ENCODE measurements at regions of chr4 and their contacts with region 1.

Region 1: GRCh38 chr4:47095884-47096283 is 64.5 kb downstream of the GABRB1 start:
- DNase-seq: no peak
- H3K4me3 ChIP-seq: no peak overlapping the region
- H3K27ac ChIP-seq: no peak overlapping the region
- H3K4me1 ChIP-seq: no peaks in the 10 kb centered on the region
- H3K27me3 ChIP-seq: no peaks in the 10 kb centered on the region
- CTCF ChIP-seq: no peak

Region 2: DNA sequence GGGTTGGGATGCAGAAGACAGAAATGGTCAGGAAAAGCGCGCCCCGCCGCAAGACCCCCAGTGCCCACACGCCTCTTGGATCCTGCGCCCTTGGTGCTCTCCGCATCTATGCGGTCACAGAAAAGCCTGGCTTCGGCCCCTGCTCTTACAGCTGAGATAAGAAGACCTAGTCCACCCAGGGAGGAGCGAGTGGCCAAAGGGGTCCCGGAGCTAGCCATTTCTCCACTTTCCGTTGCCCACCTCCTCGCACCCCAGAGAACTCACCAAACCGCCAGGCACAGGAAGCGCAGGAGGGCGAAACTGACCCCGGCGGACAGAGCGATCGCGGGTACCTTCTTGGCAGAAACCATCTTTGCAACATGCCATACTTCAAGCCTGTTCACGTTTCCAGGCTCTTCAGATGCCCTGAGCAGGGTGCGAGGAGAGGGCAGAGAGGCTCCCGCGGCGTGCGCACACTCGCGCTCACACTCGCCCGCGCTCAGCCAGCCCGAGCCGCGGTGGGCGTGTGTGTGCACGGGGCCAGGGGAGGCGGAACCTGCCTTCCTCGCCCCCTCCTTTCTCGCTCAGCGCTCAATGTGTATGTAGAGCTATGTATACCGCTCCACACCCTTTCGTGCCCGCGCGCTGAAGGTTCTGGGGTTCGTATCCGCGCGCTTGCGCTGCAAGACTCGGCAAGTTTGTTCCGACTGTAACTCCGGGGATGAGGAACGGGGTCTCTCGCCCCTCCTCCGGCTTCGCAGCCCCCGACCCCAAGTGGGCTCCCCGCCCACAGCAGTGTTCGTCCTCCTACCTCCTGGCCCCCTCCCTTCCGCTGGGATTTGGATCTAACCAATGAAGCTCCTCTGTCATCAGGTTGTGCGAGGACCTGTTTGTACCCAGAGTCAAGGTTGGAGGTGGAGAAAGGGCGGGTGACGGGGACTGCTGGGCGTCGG is 102.5 kb before region 1 on chr4 and contains the start of gene GABRA4:
- CTCF ChIA-PET with region 1: no interaction called
- dilution Hi-C with region 1: loop called (anchors 5 kb)
- in situ Hi-C with region 1: no loop called
- intact Hi-C with region 1: no loop called
- DNase-seq: peak; percentile 2
- H3K4me3 ChIP-seq: no peak within 1 kb of the TSS
- H3K27ac ChIP-seq: no peak within 1 kb of the TSS
- H3K4me1 ChIP-seq: peaks cover 6% of the 10 kb centered on the region
- H3K27me3 ChIP-seq: peaks cover 24% of the 10 kb centered on the region
- CTCF ChIP-seq: no peak
- total RNA-seq, gene GABRA4: not detected

Region 3: DNA sequence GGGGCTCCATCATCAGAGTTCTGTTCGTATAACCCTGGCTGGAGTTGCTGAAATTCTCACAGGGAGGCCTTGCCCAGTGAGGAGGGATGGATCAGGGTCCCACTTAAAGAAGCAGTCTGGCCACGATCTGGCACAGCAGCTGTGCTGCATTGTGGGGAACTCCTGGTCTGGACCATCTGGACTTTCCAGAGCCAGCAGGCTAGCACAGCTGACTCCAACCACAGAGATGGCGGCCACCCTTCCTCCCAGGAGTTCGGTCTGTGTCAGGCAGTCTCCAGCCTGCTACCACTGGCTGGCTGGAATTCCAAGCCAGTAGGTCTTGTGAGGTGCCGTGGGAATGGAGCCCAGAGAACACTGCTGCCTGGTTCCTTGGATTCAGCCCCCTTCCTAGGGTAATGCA is 1307.5 kb after region 1 on chr4:
- CTCF ChIA-PET with region 1: no interaction called
- dilution Hi-C with region 1: no loop called
- in situ Hi-C with region 1: no loop called
- intact Hi-C with region 1: no loop called
- DNase-seq: no peak
- H3K4me3 ChIP-seq: no peak overlapping the region
- H3K27ac ChIP-seq: no peak overlapping the region
- H3K4me1 ChIP-seq: no peaks in the 10 kb centered on the region
- H3K27me3 ChIP-seq: no peaks in the 10 kb centered on the region
- CTCF ChIP-seq: no peak